Caco-2 (cell line): ENCODE measurements at regions of chr1 and their contacts with region 1.

Region 1: GRCh38 chr1:231315887-231316286 is 21.8 kb downstream of the EXOC8 start:
- DNase-seq: peak; percentile 37 to 39
- H3K4me3 ChIP-seq: no peak overlapping the region
- H3K4me3 Mint-ChIP-seq: no peak overlapping the region
- H3K27ac Mint-ChIP-seq: no peak overlapping the region
- H3K4me1 ChIP-seq: no peaks in the 10 kb centered on the region
- H3K4me1 Mint-ChIP-seq: no peaks in the 10 kb centered on the region
- H3K27me3 ChIP-seq: no peaks in the 10 kb centered on the region
- H3K27me3 Mint-ChIP-seq: no peaks in the 10 kb centered on the region
- CTCF ChIP-seq: peak; percentile 35 to 37

Region 2: DNA sequence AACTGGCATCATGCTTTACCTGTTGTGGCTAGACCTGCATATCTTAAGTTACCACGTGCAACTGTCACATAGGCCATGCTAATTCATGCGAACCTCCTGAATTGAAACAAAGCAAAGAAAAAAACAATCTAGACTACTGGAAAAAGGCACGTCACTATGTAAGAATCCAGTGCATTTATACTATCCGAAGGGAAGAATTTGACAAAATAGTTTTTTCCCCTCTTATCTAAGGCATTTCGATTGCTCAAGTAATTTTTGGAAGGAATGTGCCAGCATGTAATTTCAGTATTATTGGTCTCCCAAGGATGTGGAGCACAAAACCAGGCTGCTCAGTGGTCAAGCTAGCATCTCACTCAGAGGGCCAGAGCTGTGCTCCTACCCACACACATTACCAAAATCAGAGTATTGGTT is 416.0 kb before region 1 on chr1:
- CTCF ChIA-PET with region 1: no interaction called
- POLR2A ChIA-PET with region 1: no interaction called
- intact Hi-C with region 1: no loop called
- DNase-seq: peak; percentile 57 to 58
- H3K4me3 ChIP-seq: no peak overlapping the region
- H3K4me3 Mint-ChIP-seq: peak overlapping the region; percentile 0
- H3K27ac Mint-ChIP-seq: peak overlapping the region; percentile 42
- H3K4me1 ChIP-seq: peaks cover 33% of the 10 kb centered on the region
- H3K4me1 Mint-ChIP-seq: peaks cover 32% of the 10 kb centered on the region
- H3K27me3 ChIP-seq: no peaks in the 10 kb centered on the region
- H3K27me3 Mint-ChIP-seq: no peaks in the 10 kb centered on the region
- CTCF ChIP-seq: no peak

Region 3: DNA sequence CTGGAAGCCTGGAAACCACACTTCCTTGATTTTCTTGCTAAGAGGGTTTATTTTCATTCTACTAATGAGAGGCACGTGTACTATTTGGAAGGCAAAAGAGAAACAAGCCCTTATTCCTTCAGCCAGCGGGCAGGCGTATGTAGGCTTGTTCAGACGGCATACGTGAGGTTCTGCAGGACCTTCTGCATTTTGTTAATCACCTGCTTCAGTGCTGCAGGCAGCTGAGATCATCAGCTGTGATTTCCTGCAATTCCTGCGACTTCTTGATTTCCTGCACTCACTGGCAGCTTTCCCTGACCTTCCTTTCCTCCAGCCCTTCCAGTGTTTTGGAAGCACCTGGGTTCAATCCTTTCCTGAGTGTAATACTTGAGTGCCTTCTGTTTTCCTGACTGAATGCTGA is 256.0 kb after region 1 on chr1:
- CTCF ChIA-PET with region 1: interaction called, 13 read pairs
- POLR2A ChIA-PET with region 1: no interaction called
- intact Hi-C with region 1: no loop called
- DNase-seq: no peak
- H3K4me3 ChIP-seq: no peak overlapping the region
- H3K4me3 Mint-ChIP-seq: no peak overlapping the region
- H3K27ac Mint-ChIP-seq: no peak overlapping the region
- H3K4me1 ChIP-seq: peaks cover 1% of the 10 kb centered on the region
- H3K4me1 Mint-ChIP-seq: peaks cover 4% of the 10 kb centered on the region
- H3K27me3 ChIP-seq: no peaks in the 10 kb centered on the region
- H3K27me3 Mint-ChIP-seq: no peaks in the 10 kb centered on the region
- CTCF ChIP-seq: no peak